WTC11 (cell line): ENCODE measurements at regions of chr13 and their contacts with region 1.

Region 1: GRCh38 chr13:52850396-52851136 is 2.1 kb upstream of the PCDH8 start:
- DNase-seq: peak; percentile 94
- ATAC-seq: peak; percentile 53
- H3K4me3 Mint-ChIP-seq: peak overlapping the region; percentile 88
- H3K27ac Mint-ChIP-seq: peak overlapping the region; percentile 98
- H3K4me1 Mint-ChIP-seq: peaks cover 39% of the 10 kb centered on the region
- H3K27me3 Mint-ChIP-seq: peaks cover 59% of the 10 kb centered on the region
- CTCF ChIP-seq: peak; percentile 88

Region 2: GRCh38 chr13:52686381-52686780 is 164.2 kb before region 1 on chr13:
- CTCF ChIA-PET with region 1: interaction called, 19 read pairs
- POLR2A ChIA-PET with region 1: no interaction called
- DNase-seq: no peak
- ATAC-seq: no peak
- H3K4me3 Mint-ChIP-seq: no peak overlapping the region
- H3K27ac Mint-ChIP-seq: peak overlapping the region; percentile 10; the same call in 1 of the 2 replicates
- H3K4me1 Mint-ChIP-seq: no peaks in the 10 kb centered on the region
- H3K27me3 Mint-ChIP-seq: no peaks in the 10 kb centered on the region
- CTCF ChIP-seq: no peak

Region 3: DNA sequence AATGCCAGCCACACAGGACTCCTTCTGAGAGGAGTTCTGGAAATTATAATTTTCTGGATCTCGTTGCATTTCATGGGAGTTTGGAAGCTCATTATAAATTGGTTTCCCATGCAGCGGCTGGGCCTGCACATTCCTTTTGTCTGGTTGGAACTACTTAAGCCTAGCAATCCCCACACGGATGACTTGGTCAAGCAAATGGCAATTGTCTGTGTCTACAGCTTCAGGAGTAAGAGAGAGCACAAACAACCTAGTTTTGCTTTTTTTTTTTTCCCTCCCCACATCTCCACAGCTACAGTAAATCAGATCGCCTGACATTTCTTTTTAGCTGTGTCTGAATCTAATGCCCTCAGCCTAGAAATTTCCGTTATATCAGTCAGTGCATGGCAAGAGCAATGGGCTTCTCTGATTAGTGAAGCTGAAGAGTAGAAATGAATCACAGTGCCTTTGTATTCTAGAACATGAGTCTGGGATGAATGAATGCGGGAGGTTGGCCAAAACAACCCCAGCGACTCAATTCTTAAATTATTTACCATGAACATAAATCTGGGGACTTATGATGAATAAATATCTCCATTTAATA is 17.2 kb before region 1 on chr13:
- CTCF ChIA-PET with region 1: interaction called, 15 read pairs
- POLR2A ChIA-PET with region 1: interaction called, 3 read pairs
- DNase-seq: no peak
- ATAC-seq: no peak
- H3K4me3 Mint-ChIP-seq: no peak overlapping the region
- H3K27ac Mint-ChIP-seq: no peak overlapping the region
- H3K4me1 Mint-ChIP-seq: peaks cover 29% of the 10 kb centered on the region
- H3K27me3 Mint-ChIP-seq: no peaks in the 10 kb centered on the region; the same call in 1 of the 2 replicates
- CTCF ChIP-seq: no peak

Region 4: GRCh38 chr13:52896827-52897659 is 46.5 kb after region 1 on chr13:
- CTCF ChIA-PET with region 1: interaction called, 18 read pairs
- POLR2A ChIA-PET with region 1: no interaction called
- DNase-seq: peak; percentile 71
- ATAC-seq: peak; percentile 88
- H3K4me3 Mint-ChIP-seq: no peak overlapping the region
- H3K27ac Mint-ChIP-seq: no peak overlapping the region
- H3K4me1 Mint-ChIP-seq: peaks cover 58% of the 10 kb centered on the region
- H3K27me3 Mint-ChIP-seq: peaks cover 34% of the 10 kb centered on the region
- CTCF ChIP-seq: peak; percentile 90

Region 5: DNA sequence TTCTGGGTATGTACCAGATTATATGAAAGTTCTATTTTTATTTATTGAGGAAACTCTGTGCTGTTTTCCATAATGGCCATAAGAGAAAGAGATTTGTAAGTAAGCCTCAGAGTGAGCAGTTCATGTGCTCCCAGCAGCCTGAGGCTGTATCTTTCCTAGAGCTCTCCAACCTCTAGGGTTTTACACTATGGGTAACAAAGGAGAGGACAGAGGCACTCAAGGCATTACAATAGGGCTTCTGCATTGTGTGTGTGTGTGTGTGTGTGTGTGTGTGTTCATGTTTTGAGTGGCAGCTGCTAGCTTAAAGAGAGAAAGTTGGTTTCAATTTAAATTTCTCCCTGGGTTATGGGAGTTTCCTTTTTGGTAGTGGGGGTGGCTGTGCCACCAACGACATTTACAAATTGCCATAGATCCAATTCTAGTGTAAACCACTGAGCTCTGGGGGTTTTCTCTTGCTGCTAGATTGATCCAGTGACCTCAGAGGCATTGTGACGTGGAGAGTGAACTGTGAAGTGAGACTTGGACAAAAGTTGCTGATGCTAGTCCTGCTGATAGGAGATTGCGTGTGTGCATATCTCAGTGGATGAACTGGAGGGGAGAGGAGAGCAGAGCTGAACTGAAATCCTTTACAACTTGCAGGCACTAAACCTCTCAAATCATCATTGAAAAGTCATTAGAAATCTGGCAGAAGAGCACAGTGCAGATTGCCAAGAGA is 110.8 kb after region 1 on chr13:
- CTCF ChIA-PET with region 1: interaction called, 430 read pairs
- POLR2A ChIA-PET with region 1: no interaction called
- DNase-seq: no peak
- ATAC-seq: peak; percentile 86
- H3K4me3 Mint-ChIP-seq: no peak overlapping the region
- H3K27ac Mint-ChIP-seq: no peak overlapping the region
- H3K4me1 Mint-ChIP-seq: peaks cover 27% of the 10 kb centered on the region
- H3K27me3 Mint-ChIP-seq: peaks cover 38% of the 10 kb centered on the region
- CTCF ChIP-seq: no peak

Region 6: DNA sequence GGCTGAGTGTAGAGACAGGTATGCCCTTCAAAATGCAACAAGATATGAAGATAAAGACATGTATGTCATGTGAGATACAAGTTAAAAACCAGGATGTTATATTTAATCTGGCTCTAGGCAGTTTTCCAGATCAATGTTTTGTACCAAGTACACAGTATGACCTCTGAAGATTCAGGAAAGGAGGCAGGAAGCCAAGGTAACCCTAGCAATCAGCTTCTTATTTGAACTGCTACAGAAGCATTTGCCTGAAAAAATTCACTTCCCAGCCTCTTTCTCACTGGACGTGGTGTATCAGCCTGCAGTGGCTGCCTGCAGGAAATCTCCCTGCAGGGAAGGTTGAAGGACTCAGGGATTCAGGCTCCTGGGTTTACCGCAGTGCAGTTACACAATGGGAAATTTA is 202.1 kb after region 1 on chr13:
- CTCF ChIA-PET with region 1: no interaction called
- POLR2A ChIA-PET with region 1: no interaction called
- DNase-seq: no peak
- ATAC-seq: no peak
- H3K4me3 Mint-ChIP-seq: no peak overlapping the region
- H3K27ac Mint-ChIP-seq: no peak overlapping the region
- H3K4me1 Mint-ChIP-seq: peaks cover 7% of the 10 kb centered on the region
- H3K27me3 Mint-ChIP-seq: no peaks in the 10 kb centered on the region
- CTCF ChIP-seq: no peak

Region 7: GRCh38 chr13:53151336-53152056 is 300.9 kb after region 1 on chr13:
- CTCF ChIA-PET with region 1: interaction called, 57 read pairs
- POLR2A ChIA-PET with region 1: interaction called, 3 read pairs
- DNase-seq: peak; percentile 71
- ATAC-seq: peak; percentile 99
- H3K4me3 Mint-ChIP-seq: no peak overlapping the region
- H3K27ac Mint-ChIP-seq: no peak overlapping the region
- H3K4me1 Mint-ChIP-seq: no peaks in the 10 kb centered on the region; the same call in 1 of the 2 replicates
- H3K27me3 Mint-ChIP-seq: no peaks in the 10 kb centered on the region
- CTCF ChIP-seq: peak; percentile 86